Psoas muscle (tissue), 8 donors: ENCODE measurements at regions of chr5 and their contacts with region 1.

Region 1: GRCh38 chr5:86038566-86038965 is 579.2 kb upstream of the COX7C start:
- DNase-seq: no peak
- ATAC-seq: no peak
- H3K4me3 ChIP-seq: no peak overlapping the region
- H3K27ac ChIP-seq: no peak overlapping the region
- H3K4me1 ChIP-seq: no peaks in the 10 kb centered on the region
- H3K27me3 ChIP-seq: no peaks in the 10 kb centered on the region
- CTCF ChIP-seq: no peak

Region 2: DNA sequence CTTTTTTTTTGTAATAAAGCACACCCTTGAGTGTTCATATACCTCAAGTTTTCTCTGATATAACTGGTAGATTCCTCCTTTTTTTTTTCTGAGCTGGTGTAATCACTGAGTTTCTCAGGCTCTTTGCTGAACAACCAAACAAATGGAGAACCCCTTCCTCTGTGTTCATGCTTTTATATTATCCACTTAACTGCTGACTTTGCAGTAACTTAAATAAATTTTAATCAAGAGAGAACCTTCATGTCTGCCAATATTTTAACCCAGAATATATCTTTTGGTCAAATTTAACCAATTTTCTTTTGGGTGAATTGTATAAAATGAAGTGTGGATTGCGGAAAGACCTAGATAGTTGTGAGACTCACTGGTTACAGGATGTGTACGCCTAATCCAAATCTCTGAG is 253.8 kb before region 1 on chr5:
- intact Hi-C with region 1: loop called in 1 of 2 experiments (anchors 5 kb)
- DNase-seq: no peak
- ATAC-seq: no peak
- H3K4me3 ChIP-seq: no peak overlapping the region
- H3K27ac ChIP-seq: no peak overlapping the region
- H3K4me1 ChIP-seq: no peaks in the 10 kb centered on the region
- H3K27me3 ChIP-seq: no peaks in the 10 kb centered on the region
- CTCF ChIP-seq: no peak